ENCODE measurements at regions of chr12 and their contacts with region 1.

Region 1: GRCh38 chr12:94133964-94134795 is 14.2 kb upstream of the PLXNC1 start:
- DNase-seq: peak; percentile 64
- H3K4me3 Mint-ChIP-seq: no peak overlapping the region
- H3K27ac Mint-ChIP-seq: no peak overlapping the region
- H3K4me1 Mint-ChIP-seq: no peaks in the 10 kb centered on the region
- H3K27me3 Mint-ChIP-seq: peaks cover 8% of the 10 kb centered on the region
- CTCF ChIP-seq: peak; percentile 72

Region 2: DNA sequence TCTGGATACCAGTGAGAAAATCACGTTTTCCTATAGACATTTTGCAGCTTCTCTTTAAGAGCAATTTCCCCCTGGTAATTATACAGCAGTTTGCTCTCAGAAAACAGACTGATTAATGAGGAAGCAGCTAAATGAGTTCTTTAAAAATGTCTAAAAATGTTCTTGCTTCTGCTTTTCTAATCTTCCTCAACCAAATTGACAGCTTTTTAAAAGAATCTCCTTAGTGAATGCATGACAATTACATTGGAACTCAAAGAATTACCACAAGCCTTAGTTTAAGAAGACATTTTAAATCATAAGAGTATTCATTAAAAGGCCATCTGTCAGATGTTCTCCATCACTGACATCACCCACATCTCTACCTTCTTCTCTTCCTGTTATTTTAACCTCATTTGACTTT is 121.6 kb before region 1 on chr12:
- CTCF ChIA-PET with region 1: no interaction called
- POLR2A ChIA-PET with region 1: no interaction called
- intact Hi-C with region 1: no loop called
- DNase-seq: no peak
- H3K4me3 Mint-ChIP-seq: no peak overlapping the region
- H3K27ac Mint-ChIP-seq: no peak overlapping the region
- H3K4me1 Mint-ChIP-seq: peaks cover 7% of the 10 kb centered on the region
- H3K27me3 Mint-ChIP-seq: no peaks in the 10 kb centered on the region
- CTCF ChIP-seq: no peak

Region 3: DNA sequence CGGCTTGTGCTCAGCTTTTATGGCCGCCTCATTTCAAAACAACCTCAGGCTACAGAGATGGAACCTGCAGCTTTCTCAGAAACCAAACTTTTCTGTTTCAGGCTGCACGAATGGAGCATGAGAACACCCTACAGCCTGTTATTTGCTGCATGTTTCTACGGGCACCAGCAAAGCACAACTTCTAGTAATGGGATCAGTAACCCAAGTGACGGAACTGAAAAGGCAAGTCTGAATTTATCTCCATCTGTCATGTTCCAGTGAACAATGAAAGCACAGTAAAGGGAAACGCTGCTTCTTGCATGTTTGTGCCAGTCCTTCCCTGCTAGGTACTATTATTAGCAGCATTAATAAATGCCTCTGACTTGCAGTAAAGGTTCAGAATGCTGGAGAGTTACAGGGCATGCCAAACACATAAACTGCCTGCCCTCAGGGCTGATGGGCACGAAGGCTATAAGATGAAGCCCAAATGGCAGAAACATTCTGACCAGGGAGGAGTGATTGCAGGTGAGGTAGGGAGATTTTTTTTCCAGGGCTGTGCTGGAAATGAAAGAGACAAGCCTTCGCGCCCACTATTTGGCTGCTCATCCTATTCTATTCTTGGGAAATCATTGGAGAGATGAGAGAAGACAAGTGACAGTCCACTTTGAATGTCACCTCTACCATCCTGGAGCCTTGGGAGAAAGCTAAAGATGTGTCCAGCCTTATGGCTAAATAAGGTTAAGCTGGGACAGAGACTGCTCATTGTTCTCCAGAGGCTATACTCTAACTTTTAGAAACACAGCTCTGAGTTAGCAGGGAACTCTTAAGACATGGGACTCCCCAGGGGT is 86.2 kb before region 1 on chr12:
- CTCF ChIA-PET with region 1: no interaction called
- POLR2A ChIA-PET with region 1: no interaction called
- intact Hi-C with region 1: no loop called
- DNase-seq: no peak
- H3K4me3 Mint-ChIP-seq: no peak overlapping the region
- H3K27ac Mint-ChIP-seq: peak overlapping the region; percentile 66
- H3K4me1 Mint-ChIP-seq: peaks cover 28% of the 10 kb centered on the region
- H3K27me3 Mint-ChIP-seq: no peaks in the 10 kb centered on the region
- CTCF ChIP-seq: no peak

Region 4: GRCh38 chr12:94230357-94230905 is 96.3 kb after region 1 on chr12:
- CTCF ChIA-PET with region 1: no interaction called
- POLR2A ChIA-PET with region 1: no interaction called
- intact Hi-C with region 1: no loop called
- DNase-seq: no peak
- H3K4me3 Mint-ChIP-seq: no peak overlapping the region
- H3K27ac Mint-ChIP-seq: no peak overlapping the region
- H3K4me1 Mint-ChIP-seq: no peaks in the 10 kb centered on the region
- H3K27me3 Mint-ChIP-seq: peaks cover 27% of the 10 kb centered on the region
- CTCF ChIP-seq: no peak

Region 5: DNA sequence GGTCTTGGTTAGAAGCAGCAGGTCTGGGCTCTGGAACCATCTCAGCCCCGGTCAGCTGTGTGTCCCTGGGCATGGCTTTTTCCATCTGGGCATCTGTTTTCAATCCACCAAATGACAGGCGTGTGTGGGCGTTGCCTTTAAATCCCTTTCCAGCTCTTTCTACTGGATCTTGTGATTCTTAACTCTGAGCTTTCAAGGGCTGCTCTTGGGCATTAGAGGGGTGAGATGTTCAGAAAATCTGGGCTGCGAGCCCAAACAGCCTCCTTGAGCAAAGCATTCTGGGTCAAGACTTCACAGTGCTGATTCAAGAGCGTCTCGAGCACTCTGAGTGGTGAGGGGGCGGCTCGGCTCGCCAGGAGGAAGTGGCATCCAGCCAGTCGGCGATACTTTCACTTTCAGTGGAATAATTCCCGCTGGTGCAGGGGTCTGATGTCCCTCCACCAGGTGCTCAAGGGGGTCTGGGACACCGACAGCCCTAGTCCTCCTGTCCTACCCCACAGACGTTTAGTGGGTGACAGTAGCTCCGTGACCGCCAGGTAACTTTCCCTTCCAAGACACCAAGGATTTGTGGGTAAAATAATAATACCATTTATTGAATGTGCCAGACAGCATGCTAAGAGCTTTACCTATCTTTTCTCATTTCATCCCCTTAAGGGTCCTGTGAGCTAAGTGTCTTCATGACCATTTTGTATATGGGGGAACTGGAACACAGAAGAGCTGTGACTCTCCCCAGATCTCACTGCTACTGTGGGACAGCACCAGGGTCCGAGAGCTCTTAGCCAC is 128.2 kb after region 1 on chr12:
- CTCF ChIA-PET with region 1: interaction called, 3 read pairs
- POLR2A ChIA-PET with region 1: no interaction called
- intact Hi-C with region 1: loop called (anchors 10 kb)
- DNase-seq: peak; percentile 87
- H3K4me3 Mint-ChIP-seq: peak overlapping the region; percentile 81
- H3K27ac Mint-ChIP-seq: peak overlapping the region; percentile 87
- H3K4me1 Mint-ChIP-seq: peaks cover 13% of the 10 kb centered on the region
- H3K27me3 Mint-ChIP-seq: no peaks in the 10 kb centered on the region
- CTCF ChIP-seq: no peak

Region 6: DNA sequence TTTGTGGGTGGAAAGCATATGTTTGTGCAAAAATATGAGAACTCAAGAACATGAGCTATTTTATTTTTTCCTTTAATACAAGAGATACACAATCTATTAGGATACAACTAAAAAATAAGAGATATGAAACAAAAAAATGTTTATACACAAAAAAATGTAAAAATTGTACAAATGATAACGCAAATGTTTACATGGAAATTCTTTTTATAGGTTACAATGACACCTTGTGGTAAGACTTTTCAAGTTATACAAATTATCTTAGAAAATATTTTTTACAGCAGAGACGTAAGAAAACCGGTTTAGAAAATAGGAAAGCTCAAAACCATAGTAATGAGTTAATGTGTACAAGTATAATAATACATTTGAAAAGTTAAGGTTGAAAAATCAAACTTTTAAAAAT is 300.0 kb after region 1 on chr12:
- CTCF ChIA-PET with region 1: interaction called, 11 read pairs
- POLR2A ChIA-PET with region 1: interaction called, 3 read pairs
- intact Hi-C with region 1: loop called (anchors 1 kb)
- DNase-seq: no peak
- H3K4me3 Mint-ChIP-seq: no peak overlapping the region
- H3K27ac Mint-ChIP-seq: no peak overlapping the region
- H3K4me1 Mint-ChIP-seq: no peaks in the 10 kb centered on the region
- H3K27me3 Mint-ChIP-seq: no peaks in the 10 kb centered on the region
- CTCF ChIP-seq: peak; percentile 16

Region 7: GRCh38 chr12:94532490-94533422 is 398.6 kb after region 1 on chr12:
- CTCF ChIA-PET with region 1: interaction called, 15 read pairs
- POLR2A ChIA-PET with region 1: no interaction called
- intact Hi-C with region 1: loop called (anchors 1 kb)
- DNase-seq: peak; percentile 80
- H3K4me3 Mint-ChIP-seq: no peak overlapping the region
- H3K27ac Mint-ChIP-seq: no peak overlapping the region
- H3K4me1 Mint-ChIP-seq: peaks cover 10% of the 10 kb centered on the region
- H3K27me3 Mint-ChIP-seq: no peaks in the 10 kb centered on the region
- CTCF ChIP-seq: peak; percentile 87

Measured in MCF 10A (cell line).